ENCODE measurements at regions of chr6 and their contacts with region 1.

Region 1: GRCh38 chr6:157461000-157461915 is 80.3 kb downstream of the ZDHHC14 start:
- DNase-seq: peak; percentile 42
- H3K4me3 Mint-ChIP-seq: peak overlapping the region; percentile 24
- H3K27ac Mint-ChIP-seq: peak overlapping the region; percentile 92
- H3K4me1 Mint-ChIP-seq: peaks cover 63% of the 10 kb centered on the region
- H3K27me3 Mint-ChIP-seq: no peaks in the 10 kb centered on the region

Region 2: DNA sequence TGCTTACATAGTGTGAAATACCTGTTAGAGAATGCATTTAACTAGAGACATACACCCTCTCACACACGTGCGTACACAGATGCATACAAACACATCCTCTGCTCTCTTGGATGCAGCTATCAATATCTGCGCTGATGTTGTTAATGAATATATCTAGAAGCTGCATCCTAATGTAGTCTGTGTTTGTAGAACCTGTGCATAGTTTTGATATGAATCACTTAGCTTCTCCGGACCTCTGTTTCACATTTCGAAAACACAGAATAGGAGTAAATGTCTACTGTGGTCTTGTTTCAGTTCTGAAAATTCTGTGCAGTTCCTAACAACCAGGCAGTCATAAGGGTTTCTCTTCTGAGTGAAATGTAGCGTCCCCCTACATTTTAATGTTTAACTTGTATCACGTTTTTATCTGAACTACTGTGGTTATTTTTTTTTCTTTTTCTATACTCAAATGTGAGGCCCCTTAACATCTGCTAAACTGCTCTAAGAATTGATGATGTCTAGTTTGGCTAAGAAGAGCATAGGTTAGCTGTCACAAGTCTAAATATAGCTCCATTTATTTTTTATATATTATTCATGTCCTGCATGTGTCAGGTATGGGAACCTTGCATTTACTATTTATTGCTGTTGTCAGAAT is 392.4 kb before region 1 on chr6:
- intact Hi-C with region 1: loop called (anchors 10 kb)
- DNase-seq: no peak
- H3K4me3 Mint-ChIP-seq: no peak overlapping the region
- H3K27ac Mint-ChIP-seq: peak overlapping the region; percentile 58
- H3K4me1 Mint-ChIP-seq: peaks cover 54% of the 10 kb centered on the region
- H3K27me3 Mint-ChIP-seq: no peaks in the 10 kb centered on the region

Region 3: GRCh38 chr6:157304899-157305663 is 156.2 kb before region 1 on chr6:
- intact Hi-C with region 1: no loop called
- DNase-seq: no peak
- H3K4me3 Mint-ChIP-seq: no peak overlapping the region
- H3K27ac Mint-ChIP-seq: no peak overlapping the region
- H3K4me1 Mint-ChIP-seq: peaks cover 6% of the 10 kb centered on the region
- H3K27me3 Mint-ChIP-seq: no peaks in the 10 kb centered on the region

Region 4: DNA sequence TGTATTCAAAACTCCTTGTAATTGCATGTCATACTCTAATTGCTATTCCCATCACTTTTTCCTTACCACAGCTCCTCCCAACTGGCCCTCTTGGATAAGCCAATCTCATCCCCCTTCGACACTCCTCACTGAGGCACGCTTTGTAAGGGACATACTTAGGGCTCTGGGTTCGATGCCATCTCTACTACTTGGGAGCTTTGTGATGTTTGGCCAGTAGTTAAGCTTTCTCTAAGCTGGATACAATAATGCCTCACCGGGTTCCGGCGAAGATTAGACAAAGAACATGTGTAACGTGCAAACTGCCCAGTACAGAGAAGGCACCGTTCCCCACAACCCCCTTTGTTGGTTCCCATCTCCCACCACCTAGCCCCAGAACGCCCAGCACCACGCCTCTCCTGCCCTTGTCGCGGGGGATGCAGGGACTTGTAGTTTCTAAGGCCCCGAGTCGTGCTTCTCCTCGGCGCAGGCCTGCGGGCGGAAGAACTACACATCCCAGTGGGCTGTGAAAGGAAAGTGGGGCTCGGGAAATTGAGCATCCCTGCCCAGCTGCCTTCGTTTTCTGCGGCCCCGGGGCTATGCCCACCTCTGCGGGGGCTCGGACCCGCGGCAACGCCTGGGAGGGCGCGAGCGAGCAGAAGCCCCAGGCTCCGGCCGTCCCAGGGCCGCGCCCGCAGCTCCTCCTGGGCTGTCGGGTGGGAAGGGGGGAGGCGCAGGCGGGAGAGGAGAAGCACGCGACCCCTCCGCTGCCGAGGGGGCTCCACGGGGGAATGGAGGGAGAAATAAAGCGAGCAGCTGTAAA is 81.4 kb before region 1 on chr6:
- intact Hi-C with region 1: loop called (anchors 2 kb)
- DNase-seq: peak; percentile 84
- H3K4me3 Mint-ChIP-seq: peak overlapping the region; percentile 74
- H3K27ac Mint-ChIP-seq: peak overlapping the region; percentile 59
- H3K4me1 Mint-ChIP-seq: peaks cover 29% of the 10 kb centered on the region
- H3K27me3 Mint-ChIP-seq: peaks cover 14% of the 10 kb centered on the region

Region 5: DNA sequence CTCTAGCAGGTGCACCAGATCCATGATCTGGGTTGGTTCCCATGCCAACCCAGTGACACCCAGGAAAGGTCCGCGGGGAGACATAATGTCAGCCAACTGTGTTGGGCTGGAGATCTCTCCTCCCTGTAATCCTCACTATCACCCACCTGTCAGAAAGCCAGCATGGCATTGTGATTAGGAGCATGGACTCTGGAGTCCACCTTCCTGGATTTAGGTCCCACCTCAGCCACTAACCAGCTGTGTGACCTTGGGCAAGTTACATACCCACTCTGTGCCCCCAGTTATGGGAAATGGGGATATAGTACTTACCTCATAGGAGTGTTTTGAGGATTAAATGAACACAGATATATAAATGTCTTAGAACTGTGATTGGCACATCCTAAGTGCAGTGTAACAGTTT is 17.7 kb after region 1 on chr6:
- intact Hi-C with region 1: loop called (anchors 1 kb)
- DNase-seq: no peak
- H3K4me3 Mint-ChIP-seq: no peak overlapping the region
- H3K27ac Mint-ChIP-seq: no peak overlapping the region
- H3K4me1 Mint-ChIP-seq: peaks cover 34% of the 10 kb centered on the region
- H3K27me3 Mint-ChIP-seq: no peaks in the 10 kb centered on the region

Region 6: DNA sequence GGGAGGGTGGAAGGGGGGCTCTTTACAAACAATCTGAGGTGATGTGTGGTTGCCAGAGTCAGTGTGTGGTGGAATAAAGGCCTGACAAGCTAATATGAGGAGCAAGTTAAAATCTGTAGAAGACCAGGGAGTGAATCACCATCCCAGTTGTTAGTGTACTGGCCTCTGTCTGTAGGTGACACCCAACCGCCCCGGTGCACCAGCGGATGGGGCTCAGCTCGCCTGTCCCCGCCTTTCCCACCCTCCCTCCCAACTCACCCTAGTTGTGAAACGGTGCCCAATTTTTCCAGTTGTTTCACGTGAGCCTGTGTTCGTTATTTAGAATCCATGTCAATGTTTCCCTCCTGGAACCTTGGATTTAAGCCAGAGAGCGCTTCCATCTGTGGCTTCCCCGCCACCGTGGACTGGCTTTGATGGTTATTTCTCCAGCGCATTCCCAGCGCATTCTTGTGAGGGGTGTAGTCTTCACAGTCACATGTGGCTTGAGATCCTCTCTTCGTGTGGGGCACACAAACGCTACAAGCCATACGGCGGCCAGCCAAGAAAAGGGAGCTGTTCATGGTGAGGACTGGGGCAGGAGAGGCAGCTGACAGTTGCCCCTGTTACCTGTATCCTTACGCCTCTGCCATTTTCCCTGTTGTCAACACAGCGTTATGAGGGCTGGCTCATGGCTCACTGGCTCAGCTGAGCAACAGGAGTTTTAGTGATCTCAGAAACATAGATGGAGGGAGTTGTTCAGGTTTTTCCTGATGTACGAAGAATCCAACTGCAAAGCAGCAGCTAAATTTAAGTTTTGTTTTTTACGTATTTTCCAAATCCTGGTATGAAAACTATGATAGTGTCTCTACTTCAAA is 57.4 kb after region 1 on chr6:
- intact Hi-C with region 1: no loop called
- DNase-seq: no peak
- H3K4me3 Mint-ChIP-seq: no peak overlapping the region
- H3K27ac Mint-ChIP-seq: no peak overlapping the region
- H3K4me1 Mint-ChIP-seq: peaks cover 15% of the 10 kb centered on the region
- H3K27me3 Mint-ChIP-seq: no peaks in the 10 kb centered on the region

Region 7: DNA sequence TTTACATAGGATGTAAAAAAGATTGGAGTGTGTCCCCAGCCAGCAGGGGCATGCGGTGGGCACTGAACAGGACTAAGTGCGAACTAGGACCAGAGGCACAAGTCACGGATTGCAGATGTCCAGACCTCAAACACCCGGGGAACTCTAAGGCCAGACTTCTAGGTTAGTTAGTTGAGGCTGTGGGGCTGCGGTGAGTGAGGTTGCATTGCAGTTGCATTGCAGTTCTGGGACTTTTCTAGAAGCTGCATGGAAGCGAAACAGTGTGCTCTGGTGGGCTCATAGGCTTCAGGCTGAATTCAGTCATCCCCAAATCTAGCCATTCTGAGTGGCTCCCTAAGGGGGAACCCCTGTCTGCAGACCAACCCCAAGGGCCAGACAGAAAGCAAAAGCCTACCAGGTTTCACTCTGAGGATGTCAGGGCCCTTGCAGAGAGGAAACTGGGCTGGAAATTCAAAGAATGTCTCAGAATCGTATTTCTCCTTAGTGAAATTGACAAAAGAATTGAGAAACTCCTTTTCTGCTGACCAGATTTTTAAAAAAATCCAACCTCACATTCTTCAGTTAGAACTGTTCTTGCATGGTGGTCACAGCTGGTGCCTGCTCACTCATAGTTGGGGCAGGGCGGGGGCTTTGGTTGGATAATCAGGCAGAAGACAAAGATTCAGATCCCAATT is 102.5 kb after region 1 on chr6:
- intact Hi-C with region 1: loop called (anchors 10 kb)
- DNase-seq: no peak
- H3K4me3 Mint-ChIP-seq: no peak overlapping the region
- H3K27ac Mint-ChIP-seq: no peak overlapping the region
- H3K4me1 Mint-ChIP-seq: peaks cover 27% of the 10 kb centered on the region
- H3K27me3 Mint-ChIP-seq: peaks cover 4% of the 10 kb centered on the region

Region 8: DNA sequence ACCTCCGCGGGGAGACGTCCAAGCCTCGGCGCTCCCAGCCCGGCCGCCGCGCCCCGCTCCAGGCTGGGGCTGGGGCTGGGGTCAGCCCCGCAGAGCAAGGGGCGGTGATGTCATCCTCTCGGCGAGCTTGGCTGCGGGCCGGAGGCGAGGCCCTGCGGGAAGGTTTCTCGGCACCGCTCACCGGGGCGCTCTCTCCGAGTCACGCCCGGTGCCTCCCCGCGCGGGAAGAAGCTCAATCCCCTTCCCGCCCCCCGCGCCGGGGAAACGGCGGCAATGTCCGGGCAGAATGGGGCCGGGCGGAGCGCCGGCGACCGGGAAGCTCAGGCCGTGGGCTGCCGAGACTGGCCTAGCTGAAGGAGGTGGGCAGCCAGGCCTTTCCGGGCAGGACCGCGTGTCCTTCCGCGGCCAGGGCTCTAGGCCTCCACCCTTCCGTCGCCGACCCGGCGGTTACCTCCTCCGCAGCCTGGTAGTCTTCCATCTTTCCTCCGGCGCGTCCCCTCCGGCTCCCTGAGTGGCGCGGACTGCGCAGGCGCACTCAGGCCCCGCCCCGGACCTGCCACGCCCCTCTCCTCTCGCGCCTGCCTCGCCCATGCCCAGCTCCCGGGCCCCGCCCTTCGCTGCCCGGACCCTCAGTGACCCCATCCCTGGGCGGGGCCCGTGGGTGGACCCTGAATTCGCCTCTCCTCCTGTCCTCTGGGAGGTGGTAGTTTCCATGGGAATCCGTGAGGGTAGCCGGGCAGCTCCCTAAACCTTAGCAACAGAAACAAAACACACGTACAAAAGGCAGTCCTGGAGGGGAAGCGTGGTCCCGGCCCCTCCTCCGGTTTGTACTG is 1183.2 kb after region 1 on chr6 and contains the start of gene DYNLT1:
- intact Hi-C with region 1: loop called (anchors 5 kb)
- DNase-seq: peak; percentile 88
- H3K4me3 Mint-ChIP-seq: peak within 1 kb of the TSS; percentile 97
- H3K27ac Mint-ChIP-seq: peak within 1 kb of the TSS; percentile 97
- H3K4me1 Mint-ChIP-seq: peaks cover 69% of the 10 kb centered on the region
- H3K27me3 Mint-ChIP-seq: no peaks in the 10 kb centered on the region
- total RNA-seq, gene DYNLT1: 94.4 and 108 TPM in 2 replicates